Dendritic cell treated with granulocyte-macrophage colony-stimulating factor and Interleukin-4, amounts not matched to agents 40 ng/mL and 50 ng/mL, for 4 days (primary cell): ENCODE measurements at regions of chr2 and their contacts with region 1.

Region 1: GRCh38 chr2:218733171-218734021 is 22.8 kb downstream of the TTLL4 start:
- H3K4me3 Mint-ChIP-seq: no peak overlapping the region
- H3K27ac Mint-ChIP-seq: peak overlapping the region; percentile 78
- H3K4me1 Mint-ChIP-seq: peaks cover 62% of the 10 kb centered on the region
- H3K27me3 Mint-ChIP-seq: no peaks in the 10 kb centered on the region

Region 2: GRCh38 chr2:218781691-218782527 is 48.5 kb after region 1 on chr2 and contains the start of gene CYP27A1:
- intact Hi-C with region 1: loop called (anchors 10 kb)
- H3K4me3 Mint-ChIP-seq: peak within 1 kb of the TSS; percentile 59
- H3K27ac Mint-ChIP-seq: peak within 1 kb of the TSS; percentile 85
- H3K4me1 Mint-ChIP-seq: peaks cover 28% of the 10 kb centered on the region
- H3K27me3 Mint-ChIP-seq: peaks cover 22% of the 10 kb centered on the region